Activated CD4-positive, alpha-beta T cell treated with anti-CD3 and anti-CD28 coated beads for 36 hours (primary cell): ENCODE measurements at regions of chr21 and their contacts with region 1.

Region 1: DNA sequence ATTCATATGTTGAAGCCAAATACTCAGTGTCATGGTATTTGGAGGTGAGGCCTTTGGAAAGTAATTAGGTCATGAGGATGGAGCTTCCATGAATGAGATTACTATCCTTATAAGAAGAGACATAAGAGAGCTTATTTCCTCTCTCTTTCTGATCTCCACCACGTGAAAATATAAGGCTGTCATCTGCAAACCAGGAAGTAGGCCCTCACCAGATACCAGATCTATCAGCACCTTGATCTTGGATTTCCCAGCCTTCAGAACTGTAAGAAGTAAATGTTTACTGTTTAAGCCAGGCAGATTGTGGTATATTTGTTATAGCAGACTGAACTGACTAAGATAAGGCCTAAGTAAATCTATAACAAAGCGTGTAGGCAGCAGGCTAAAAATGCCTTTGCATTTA is 25.3 kb downstream of the RBM11 start:
- DNase-seq: no peak
- ATAC-seq: no peak
- H3K4me3 Mint-ChIP-seq: no peak overlapping the region
- H3K27ac Mint-ChIP-seq: no peak overlapping the region
- H3K4me1 Mint-ChIP-seq: peaks cover 8% of the 10 kb centered on the region
- H3K27me3 Mint-ChIP-seq: no peaks in the 10 kb centered on the region

Region 2: GRCh38 chr21:14120091-14120734 is 121.1 kb before region 1 on chr21:
- CTCF ChIA-PET with region 1: interaction called, 3 read pairs
- POLR2A ChIA-PET with region 1: no interaction called
- intact Hi-C with region 1: loop called in 1 of 2 experiments (anchors 10 kb)
- DNase-seq: peak; percentile 79
- ATAC-seq: peak; percentile 73
- H3K4me3 Mint-ChIP-seq: no peak overlapping the region
- H3K27ac Mint-ChIP-seq: no peak overlapping the region
- H3K4me1 Mint-ChIP-seq: peaks cover 8% of the 10 kb centered on the region
- H3K27me3 Mint-ChIP-seq: no peaks in the 10 kb centered on the region

Region 3: DNA sequence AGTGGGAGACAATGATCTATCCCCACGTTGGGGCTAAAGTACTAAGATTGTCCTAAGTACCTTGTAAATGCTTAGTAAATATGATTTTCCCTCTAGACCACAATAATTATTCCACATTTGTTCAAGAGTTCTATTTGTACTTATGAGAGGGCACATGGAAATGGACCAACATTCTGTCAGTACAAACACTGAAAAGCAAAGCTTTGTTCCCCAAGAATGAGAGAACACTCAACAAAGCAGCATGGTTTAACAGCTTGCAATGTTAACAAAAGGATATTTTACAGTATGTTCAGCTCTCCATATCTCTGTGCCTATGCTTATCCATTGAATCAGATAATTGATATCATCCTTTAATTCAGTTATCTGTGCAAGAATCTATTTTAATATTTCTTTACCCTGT is 10.0 kb after region 1 on chr21:
- CTCF ChIA-PET with region 1: interaction called, 22 read pairs
- POLR2A ChIA-PET with region 1: no interaction called
- intact Hi-C with region 1: no loop called
- DNase-seq: no peak
- ATAC-seq: no peak
- H3K4me3 Mint-ChIP-seq: no peak overlapping the region
- H3K27ac Mint-ChIP-seq: no peak overlapping the region
- H3K4me1 Mint-ChIP-seq: peaks cover 2% of the 10 kb centered on the region
- H3K27me3 Mint-ChIP-seq: peaks cover 14% of the 10 kb centered on the region

Region 4: GRCh38 chr21:14901482-14901958 is 660.2 kb after region 1 on chr21:
- CTCF ChIA-PET with region 1: no interaction called
- POLR2A ChIA-PET with region 1: no interaction called
- intact Hi-C with region 1: no loop called
- DNase-seq: peak; percentile 15
- ATAC-seq: peak; percentile 81
- H3K4me3 Mint-ChIP-seq: no peak overlapping the region
- H3K27ac Mint-ChIP-seq: peak overlapping the region; percentile 20
- H3K4me1 Mint-ChIP-seq: peaks cover 20% of the 10 kb centered on the region
- H3K27me3 Mint-ChIP-seq: no peaks in the 10 kb centered on the region